AG04449 (cell line): ENCODE measurements at regions of chr16 and their contacts with region 1.

Region 1: DNA sequence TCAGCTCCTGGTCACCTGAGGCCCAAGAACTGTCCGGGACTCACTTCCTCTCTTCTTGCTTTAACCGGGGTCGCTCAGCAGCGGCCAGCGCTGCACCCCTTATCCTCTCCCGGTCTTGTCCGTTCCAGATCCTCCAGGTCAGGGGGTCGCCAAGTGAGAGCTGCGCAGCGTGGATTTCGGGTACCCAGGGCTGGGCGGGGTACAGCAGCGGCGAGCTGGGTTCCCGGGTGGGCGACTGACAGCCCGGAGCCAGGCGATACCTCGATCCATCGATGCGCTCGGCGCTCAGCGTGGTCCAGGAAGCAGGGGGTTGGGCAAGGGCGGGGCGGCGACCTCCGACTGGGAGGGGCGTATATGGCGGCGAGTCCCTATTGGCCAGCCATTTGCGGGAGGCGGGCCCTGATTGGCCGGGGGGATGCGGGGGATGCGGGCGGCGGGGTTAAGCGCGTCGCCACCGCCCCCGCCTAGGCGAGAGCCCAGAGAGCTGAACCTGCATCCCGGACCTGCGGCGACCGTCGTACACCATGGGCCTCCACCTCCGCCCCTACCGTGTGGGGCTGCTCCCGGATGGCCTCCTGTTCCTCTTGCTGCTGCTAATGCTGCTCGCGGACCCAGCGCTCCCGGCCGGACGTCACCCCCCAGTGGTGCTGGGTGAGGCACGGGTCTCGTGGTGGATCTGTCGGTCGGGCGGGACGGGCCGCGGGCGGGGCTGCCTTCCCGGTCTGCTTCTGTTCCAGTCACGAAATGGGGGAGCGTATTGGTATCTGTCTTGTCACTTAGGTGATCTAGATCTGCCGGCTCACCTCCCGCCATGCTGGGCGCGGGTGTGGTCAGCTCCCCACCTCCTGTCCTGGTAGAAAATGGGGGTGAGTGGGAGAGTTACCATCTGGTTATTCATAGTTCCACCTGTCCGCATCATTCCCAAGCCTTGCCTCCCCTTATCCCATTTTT is at the start of gene PLA2G15:
- DNase-seq: peak; percentile 73
- H3K4me3 ChIP-seq: peak within 1 kb of the TSS; percentile 99
- CTCF ChIP-seq: no peak

Region 2: GRCh38 chr16:68257906-68258800 is 13.0 kb after region 1 on chr16:
- CTCF ChIA-PET with region 1: interaction called, 70 read pairs
- POLR2A ChIA-PET with region 1: interaction called, 3 read pairs
- DNase-seq: peak; percentile 31
- H3K4me3 ChIP-seq: no peak overlapping the region
- CTCF ChIP-seq: no peak